MCF 10A (cell line): ENCODE measurements at regions of chr10 and their contacts with region 1.

Region 1: GRCh38 chr10:67520924-67521520 is 175.0 kb downstream of the CTNNA3 start:
- DNase-seq: peak; percentile 75
- H3K4me3 Mint-ChIP-seq: no peak overlapping the region
- H3K27ac Mint-ChIP-seq: no peak overlapping the region
- H3K4me1 Mint-ChIP-seq: no peaks in the 10 kb centered on the region
- H3K27me3 Mint-ChIP-seq: peaks cover 25% of the 10 kb centered on the region
- CTCF ChIP-seq: peak; percentile 90

Region 2: DNA sequence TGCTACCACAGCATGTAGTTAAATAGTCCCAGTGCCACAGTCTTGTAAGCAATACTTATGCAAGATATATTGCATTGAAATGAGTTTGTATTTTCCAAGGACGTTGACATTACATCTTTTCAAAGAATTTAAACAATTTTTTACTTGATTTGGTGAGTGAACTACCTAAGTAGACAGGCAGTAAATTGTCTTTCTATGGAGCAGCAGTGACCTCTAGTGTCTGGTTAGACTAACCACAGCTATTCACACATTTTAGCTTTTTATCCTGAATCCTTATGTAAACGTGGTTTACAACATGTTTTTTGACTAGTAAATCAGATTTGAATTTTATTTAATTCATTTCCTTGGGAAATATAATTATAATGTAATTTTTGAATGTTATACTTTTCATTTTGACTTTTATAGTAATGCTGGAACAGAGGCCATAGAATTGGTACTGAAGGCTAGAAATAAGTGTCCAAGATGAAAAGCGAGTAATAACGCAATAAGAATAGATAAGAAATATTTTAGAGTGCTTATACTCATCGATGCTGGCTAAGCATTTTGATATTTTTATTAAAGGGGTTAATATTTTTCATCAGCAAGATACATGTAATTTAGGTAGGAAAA is 589.6 kb before region 1 on chr10:
- CTCF ChIA-PET with region 1: interaction called, 12 read pairs
- POLR2A ChIA-PET with region 1: no interaction called
- intact Hi-C with region 1: loop called (anchors 2 kb)
- DNase-seq: peak; percentile 72
- H3K4me3 Mint-ChIP-seq: no peak overlapping the region
- H3K27ac Mint-ChIP-seq: no peak overlapping the region
- H3K4me1 Mint-ChIP-seq: no peaks in the 10 kb centered on the region
- H3K27me3 Mint-ChIP-seq: peaks cover 52% of the 10 kb centered on the region
- CTCF ChIP-seq: peak; percentile 86

Region 3: GRCh38 chr10:67306588-67307205 is 214.3 kb before region 1 on chr10:
- CTCF ChIA-PET with region 1: interaction called, 9 read pairs
- POLR2A ChIA-PET with region 1: no interaction called
- intact Hi-C with region 1: loop called (anchors 5 kb)
- DNase-seq: peak; percentile 53
- H3K4me3 Mint-ChIP-seq: no peak overlapping the region
- H3K27ac Mint-ChIP-seq: no peak overlapping the region
- H3K4me1 Mint-ChIP-seq: no peaks in the 10 kb centered on the region
- H3K27me3 Mint-ChIP-seq: peaks cover 39% of the 10 kb centered on the region
- CTCF ChIP-seq: peak; percentile 55

Region 4: GRCh38 chr10:67438626-67439304 is 82.3 kb before region 1 on chr10:
- CTCF ChIA-PET with region 1: no interaction called
- POLR2A ChIA-PET with region 1: no interaction called
- intact Hi-C with region 1: no loop called
- DNase-seq: no peak
- H3K4me3 Mint-ChIP-seq: no peak overlapping the region
- H3K27ac Mint-ChIP-seq: no peak overlapping the region
- H3K4me1 Mint-ChIP-seq: no peaks in the 10 kb centered on the region
- H3K27me3 Mint-ChIP-seq: no peaks in the 10 kb centered on the region
- CTCF ChIP-seq: no peak

Region 5: DNA sequence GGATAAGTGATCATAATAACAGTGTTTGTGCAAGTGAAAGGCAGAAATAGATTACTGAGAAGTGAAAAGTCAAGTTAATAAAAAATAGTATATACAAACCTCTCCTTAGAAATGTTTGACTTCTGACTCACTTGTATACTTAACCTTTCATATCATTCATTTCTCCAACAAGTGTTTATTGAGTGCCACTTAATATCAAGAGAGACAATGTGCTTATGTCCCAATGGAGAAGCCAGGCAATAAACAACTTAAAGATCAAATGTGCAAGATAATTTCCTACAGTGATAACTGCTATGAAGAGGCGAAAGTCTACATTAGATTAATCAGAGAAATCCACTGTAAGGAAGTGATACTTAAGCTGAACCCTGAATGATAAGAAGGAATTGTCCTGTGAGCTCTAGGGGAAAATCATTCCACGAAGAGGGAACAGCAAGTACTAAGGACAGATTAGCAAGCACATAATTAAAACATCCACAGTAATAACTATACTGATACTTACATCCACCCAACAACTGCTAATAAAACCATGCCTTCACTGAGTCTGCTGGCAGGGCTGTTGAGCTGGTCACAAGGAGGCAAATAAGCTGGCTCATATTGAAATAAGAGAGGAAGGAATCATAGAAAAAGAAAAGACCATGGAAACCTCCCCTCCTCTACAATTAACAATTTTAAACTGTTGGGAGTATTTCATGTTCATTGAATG is 28.6 kb before region 1 on chr10:
- CTCF ChIA-PET with region 1: interaction called, 13 read pairs
- POLR2A ChIA-PET with region 1: no interaction called
- intact Hi-C with region 1: no loop called
- DNase-seq: no peak
- H3K4me3 Mint-ChIP-seq: no peak overlapping the region
- H3K27ac Mint-ChIP-seq: peak overlapping the region; percentile 2
- H3K4me1 Mint-ChIP-seq: no peaks in the 10 kb centered on the region
- H3K27me3 Mint-ChIP-seq: peaks cover 4% of the 10 kb centered on the region
- CTCF ChIP-seq: no peak

Region 6: DNA sequence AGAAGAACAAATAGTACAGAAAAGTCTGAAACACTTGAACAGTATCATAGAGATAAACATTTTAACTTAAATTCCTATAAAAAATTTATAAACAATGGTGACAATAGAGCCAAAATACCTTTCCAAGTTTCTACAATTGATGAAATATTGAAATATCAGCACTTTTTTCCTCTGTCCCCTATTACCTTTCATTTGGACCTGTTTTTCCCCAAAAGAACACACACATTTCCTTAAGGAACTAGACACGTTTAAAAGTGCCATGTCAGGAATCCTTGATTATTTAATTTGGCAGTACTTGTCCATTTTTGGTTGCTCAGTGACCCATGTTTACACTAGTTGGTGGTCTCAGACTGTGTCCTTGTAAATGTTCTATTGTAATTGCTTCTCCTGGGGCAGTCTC is 12.4 kb after region 1 on chr10:
- CTCF ChIA-PET with region 1: interaction called, 19 read pairs
- POLR2A ChIA-PET with region 1: no interaction called
- intact Hi-C with region 1: no loop called
- DNase-seq: no peak
- H3K4me3 Mint-ChIP-seq: no peak overlapping the region
- H3K27ac Mint-ChIP-seq: no peak overlapping the region
- H3K4me1 Mint-ChIP-seq: no peaks in the 10 kb centered on the region
- H3K27me3 Mint-ChIP-seq: peaks cover 45% of the 10 kb centered on the region
- CTCF ChIP-seq: no peak

Region 7: DNA sequence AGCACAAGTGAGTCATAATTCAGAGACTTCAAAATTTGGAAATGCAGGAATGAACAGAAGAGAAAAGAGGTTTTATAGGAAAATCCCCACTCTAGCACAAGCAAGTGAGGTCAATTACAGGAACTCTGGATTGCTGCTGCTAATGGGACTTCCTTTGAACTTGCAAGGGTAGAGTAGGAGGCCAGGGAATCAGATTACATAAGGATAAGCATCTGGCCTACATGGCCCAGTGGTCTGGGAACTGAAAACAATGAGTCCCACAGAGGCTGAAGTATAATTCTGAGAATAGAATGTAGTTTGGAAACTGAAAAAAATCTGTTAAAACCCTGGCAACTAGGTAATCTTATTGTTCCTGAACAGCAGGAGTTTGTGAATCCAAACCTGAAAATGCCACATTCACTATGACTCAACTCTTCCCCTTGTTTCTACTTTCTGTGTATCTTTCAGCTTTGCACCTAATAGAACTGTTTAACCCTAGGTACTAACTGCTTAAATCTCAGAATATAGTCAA is 108.5 kb after region 1 on chr10:
- CTCF ChIA-PET with region 1: no interaction called
- POLR2A ChIA-PET with region 1: no interaction called
- intact Hi-C with region 1: no loop called
- DNase-seq: peak; percentile 49
- H3K4me3 Mint-ChIP-seq: no peak overlapping the region
- H3K27ac Mint-ChIP-seq: no peak overlapping the region
- H3K4me1 Mint-ChIP-seq: no peaks in the 10 kb centered on the region
- H3K27me3 Mint-ChIP-seq: no peaks in the 10 kb centered on the region
- CTCF ChIP-seq: no peak

Region 8: DNA sequence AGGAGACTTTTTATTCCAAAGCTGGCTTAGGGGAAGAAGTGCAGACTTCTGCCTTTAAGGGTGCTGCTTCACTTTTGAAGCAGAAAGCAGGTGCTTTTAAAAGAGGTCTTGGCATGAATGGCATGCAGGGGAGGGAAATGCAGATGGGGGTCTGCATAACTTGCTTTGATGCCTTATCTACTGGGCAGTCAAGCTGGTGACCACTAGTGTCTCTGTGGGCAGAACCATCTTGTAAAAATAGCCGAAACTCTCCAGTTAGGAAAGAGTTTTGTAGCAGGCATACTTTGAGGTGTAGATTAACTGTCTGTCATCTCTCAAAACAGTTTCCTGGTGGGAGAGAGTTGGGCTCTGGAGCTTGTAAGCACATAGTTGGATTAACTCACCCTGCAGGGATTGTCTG is 184.9 kb after region 1 on chr10:
- CTCF ChIA-PET with region 1: no interaction called
- POLR2A ChIA-PET with region 1: no interaction called
- intact Hi-C with region 1: no loop called
- DNase-seq: no peak
- H3K4me3 Mint-ChIP-seq: no peak overlapping the region
- H3K27ac Mint-ChIP-seq: no peak overlapping the region
- H3K4me1 Mint-ChIP-seq: no peaks in the 10 kb centered on the region
- H3K27me3 Mint-ChIP-seq: peaks cover 36% of the 10 kb centered on the region
- CTCF ChIP-seq: no peak